ENCODE measurements at regions of chr7 and their contacts with region 1.

Region 1: DNA sequence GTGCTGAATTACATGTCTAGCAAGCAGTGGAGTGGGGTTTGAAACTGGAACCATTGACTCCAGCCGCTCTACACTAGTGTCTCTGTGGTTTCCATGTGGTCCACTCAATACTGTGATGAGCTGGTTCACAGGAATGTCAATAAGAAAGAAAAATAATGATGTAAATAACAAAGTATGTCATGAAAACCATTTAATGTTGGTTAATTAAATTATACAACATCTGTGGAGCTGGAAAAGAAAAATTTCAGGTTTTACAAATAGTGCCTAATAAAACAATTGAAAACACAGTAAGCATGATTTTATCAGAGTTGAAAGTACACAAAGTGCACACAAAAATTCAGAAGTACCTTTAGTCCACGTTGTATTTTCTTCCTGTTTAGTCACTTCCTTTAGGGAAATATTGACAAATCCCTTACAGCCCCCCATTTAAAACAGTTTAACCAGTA is 28.7 kb upstream of the NAMPT start:
- DNase-seq: no peak
- ATAC-seq: no peak
- H3K4me3 ChIP-seq: no peak overlapping the region
- H3K4me3 Mint-ChIP-seq: no peak overlapping the region
- H3K27ac ChIP-seq: no peak overlapping the region
- H3K27ac Mint-ChIP-seq: no peak overlapping the region
- H3K4me1 ChIP-seq: no peaks in the 10 kb centered on the region
- H3K4me1 Mint-ChIP-seq: no peaks in the 10 kb centered on the region
- H3K27me3 ChIP-seq: peaks cover 0 to 2% of the 10 kb centered on the region in 2 experiments
- H3K27me3 Mint-ChIP-seq: peaks cover 29% of the 10 kb centered on the region
- CTCF ChIP-seq: no peak

Region 2: GRCh38 chr7:106176414-106177299 is 136.8 kb before region 1 on chr7:
- CTCF ChIA-PET with region 1: no interaction called
- POLR2A ChIA-PET with region 1: no interaction called
- intact Hi-C with region 1: loop called (anchors 2 to 5 kb)
- DNase-seq: peak; percentile 37 to 79 (median 61)
- ATAC-seq: peak; percentile 82
- H3K4me3 ChIP-seq: no peak overlapping the region
- H3K4me3 Mint-ChIP-seq: no peak overlapping the region
- H3K27ac ChIP-seq: no peak overlapping the region
- H3K27ac Mint-ChIP-seq: no peak overlapping the region
- H3K4me1 ChIP-seq: peaks cover 6% of the 10 kb centered on the region
- H3K4me1 Mint-ChIP-seq: peaks cover 5% of the 10 kb centered on the region
- H3K27me3 ChIP-seq: peaks cover 0 to 4% of the 10 kb centered on the region in 2 experiments
- H3K27me3 Mint-ChIP-seq: peaks cover 19% of the 10 kb centered on the region
- CTCF ChIP-seq: peak; percentile 95

Region 3: GRCh38 chr7:106246902-106247711 is 66.4 kb before region 1 on chr7:
- CTCF ChIA-PET with region 1: no interaction called
- POLR2A ChIA-PET with region 1: no interaction called
- intact Hi-C with region 1: loop called in 1 of 2 experiments (anchors 5 kb)
- DNase-seq: no peak
- ATAC-seq: no peak
- H3K4me3 ChIP-seq: no peak overlapping the region
- H3K4me3 Mint-ChIP-seq: no peak overlapping the region
- H3K27ac ChIP-seq: no peak overlapping the region
- H3K27ac Mint-ChIP-seq: no peak overlapping the region
- H3K4me1 ChIP-seq: no peaks in the 10 kb centered on the region
- H3K4me1 Mint-ChIP-seq: no peaks in the 10 kb centered on the region
- H3K27me3 ChIP-seq: no peaks in the 10 kb centered on the region
- H3K27me3 Mint-ChIP-seq: no peaks in the 10 kb centered on the region
- CTCF ChIP-seq: no peak

Region 4: DNA sequence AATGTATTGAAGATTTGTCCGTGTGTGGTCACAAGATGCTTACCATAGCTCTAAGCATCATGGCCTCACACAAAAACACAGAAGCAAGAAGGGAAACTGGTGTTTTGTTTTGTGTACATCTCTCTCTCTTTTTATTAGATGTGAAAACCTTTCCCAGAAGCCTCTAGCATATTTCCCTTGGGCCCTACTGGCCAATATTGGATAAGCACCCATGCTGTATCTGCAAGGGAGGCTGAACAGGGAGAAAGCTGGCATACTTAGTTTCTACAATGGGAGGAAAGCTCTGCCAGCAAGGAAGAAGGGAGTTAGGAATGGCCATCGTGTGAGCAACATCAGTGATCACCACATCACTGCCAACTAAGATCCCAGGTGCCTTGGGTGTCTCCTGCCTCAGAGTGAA is 19.1 kb before region 1 on chr7:
- CTCF ChIA-PET with region 1: no interaction called
- POLR2A ChIA-PET with region 1: no interaction called
- intact Hi-C with region 1: no loop called
- DNase-seq: no peak
- ATAC-seq: no peak
- H3K4me3 ChIP-seq: no peak overlapping the region
- H3K4me3 Mint-ChIP-seq: no peak overlapping the region
- H3K27ac ChIP-seq: no peak overlapping the region
- H3K27ac Mint-ChIP-seq: no peak overlapping the region
- H3K4me1 ChIP-seq: no peaks in the 10 kb centered on the region
- H3K4me1 Mint-ChIP-seq: no peaks in the 10 kb centered on the region
- H3K27me3 ChIP-seq: no peaks in the 10 kb centered on the region
- H3K27me3 Mint-ChIP-seq: peaks cover 14% of the 10 kb centered on the region
- CTCF ChIP-seq: no peak

Measured in CD4-positive, alpha-beta T cell (primary cell).